ENCODE measurements at regions of chr4 and their contacts with region 1.

Region 1: DNA sequence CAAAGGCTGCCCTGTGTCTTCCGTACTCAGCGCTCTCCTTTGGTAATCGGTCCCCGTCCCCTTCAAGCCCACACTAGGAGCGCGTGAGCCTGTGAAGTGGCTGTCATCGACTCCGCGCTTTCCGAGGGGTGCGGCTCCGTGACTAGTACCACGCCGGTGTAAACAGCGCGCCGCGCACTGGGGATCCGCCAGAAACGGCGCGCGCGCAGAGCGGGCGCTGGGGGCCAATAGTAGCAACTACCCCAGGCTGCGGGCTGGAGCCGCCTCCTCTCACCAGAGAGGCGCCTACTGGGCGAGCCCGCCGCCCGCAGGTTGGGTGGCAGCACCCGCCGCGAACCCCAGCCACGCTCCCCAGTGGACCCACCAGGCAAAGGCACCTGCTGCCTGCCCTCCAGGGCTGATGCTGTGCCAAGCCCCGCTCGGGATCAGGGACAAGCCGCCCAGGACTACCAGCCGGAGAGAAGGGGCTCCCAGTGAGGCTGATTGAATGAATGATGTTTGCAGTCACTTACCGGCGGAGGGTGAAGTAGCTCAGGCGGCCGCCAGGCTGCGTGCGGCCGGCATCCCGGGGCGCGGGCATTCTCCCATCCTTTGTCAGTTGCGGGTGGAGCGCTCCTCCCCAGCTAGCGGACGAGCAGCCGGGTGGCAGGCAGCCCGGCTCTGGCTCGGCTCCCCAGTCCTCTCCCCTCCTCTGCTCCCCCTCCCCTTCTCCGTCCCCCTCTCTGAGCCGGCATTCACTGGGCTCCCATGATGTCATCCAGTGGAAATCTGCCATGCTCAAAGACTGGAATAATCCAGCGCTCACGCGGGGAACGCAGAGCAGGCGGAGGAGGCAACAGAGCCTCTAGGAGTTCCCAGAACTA is 370.3 kb upstream of the SMIM31 start:
- DNase-seq: peak; percentile 42 to 94 (median 92)
- H3K4me3 ChIP-seq: peak overlapping the region; percentile 42 to 87 (median 71)
- H3K27ac ChIP-seq: peak overlapping the region; percentile 65 to 99 (median 96)
- H3K27me3 ChIP-seq: peaks cover 0 to 9% (median 0%) of the 10 kb centered on the region in 45 donors
- CTCF ChIP-seq: peak in 55 of 56 donors; percentile 6 to 73 (median 59)

Region 2: GRCh38 chr4:163930086-163930485 is 453.5 kb before region 1 on chr4:
- intact Hi-C with region 1: loop called in 1 of 2 experiments (anchors 5 kb)
- DNase-seq: no peak
- H3K4me3 ChIP-seq: no peak overlapping the region
- H3K27ac ChIP-seq: no peak overlapping the region
- H3K27me3 ChIP-seq: no peaks in the 10 kb centered on the region
- CTCF ChIP-seq: peak in 26 of 56 donors; percentile 7 to 51 (median 25)

Region 3: DNA sequence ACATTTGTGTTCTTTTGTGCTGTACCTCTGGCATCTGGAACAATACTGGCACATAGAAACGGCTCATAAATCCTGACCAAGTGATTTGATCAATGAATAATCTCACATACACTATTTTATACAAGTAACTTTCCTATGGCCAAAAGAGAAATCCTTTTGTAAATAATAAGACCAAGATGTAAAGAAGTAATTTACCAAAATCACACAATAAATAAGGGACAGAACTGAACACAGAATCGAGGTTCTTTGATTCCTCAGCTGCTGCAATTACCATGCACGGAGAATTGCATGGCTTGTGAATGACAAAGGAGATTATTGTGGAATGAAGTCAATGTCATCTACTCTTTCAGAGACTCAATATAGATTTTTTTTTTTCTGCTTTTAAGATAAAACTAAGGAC is 206.4 kb before region 1 on chr4:
- intact Hi-C with region 1: loop called in 1 of 2 experiments (anchors 5 kb)
- DNase-seq: no peak
- H3K4me3 ChIP-seq: peak overlapping the region in 45 of 59 donors; percentile 3 to 58 (median 33)
- H3K27ac ChIP-seq: peak overlapping the region in 57 of 59 donors; percentile 13 to 91 (median 76)
- H3K27me3 ChIP-seq: no peaks in the 10 kb centered on the region
- CTCF ChIP-seq: no peak

Region 4: GRCh38 chr4:164613792-164614191 is 230.2 kb after region 1 on chr4:
- intact Hi-C with region 1: loop called in 1 of 2 experiments (anchors 10 kb)
- DNase-seq: no peak
- H3K4me3 ChIP-seq: no peak overlapping the region
- H3K27ac ChIP-seq: no peak overlapping the region
- H3K27me3 ChIP-seq: no peaks in the 10 kb centered on the region
- CTCF ChIP-seq: no peak